Activated CD4-positive, alpha-beta T cell treated with anti-CD3 and anti-CD28 coated beads, Interleukin-2, amount 10 ng/mL, durations not matched to agents 24 days and 14 days (primary cell): ENCODE measurements at regions of chr5 and their contacts with region 1.

Region 1: GRCh38 chr5:157571357-157571827 is 4.2 kb downstream of the ADAM19 start:
- DNase-seq: peak; percentile 83
- H3K4me3 Mint-ChIP-seq: peak overlapping the region; percentile 91
- H3K27ac Mint-ChIP-seq: peak overlapping the region; percentile 94
- H3K4me1 Mint-ChIP-seq: peaks cover 62% of the 10 kb centered on the region
- H3K27me3 Mint-ChIP-seq: no peaks in the 10 kb centered on the region

Region 2: DNA sequence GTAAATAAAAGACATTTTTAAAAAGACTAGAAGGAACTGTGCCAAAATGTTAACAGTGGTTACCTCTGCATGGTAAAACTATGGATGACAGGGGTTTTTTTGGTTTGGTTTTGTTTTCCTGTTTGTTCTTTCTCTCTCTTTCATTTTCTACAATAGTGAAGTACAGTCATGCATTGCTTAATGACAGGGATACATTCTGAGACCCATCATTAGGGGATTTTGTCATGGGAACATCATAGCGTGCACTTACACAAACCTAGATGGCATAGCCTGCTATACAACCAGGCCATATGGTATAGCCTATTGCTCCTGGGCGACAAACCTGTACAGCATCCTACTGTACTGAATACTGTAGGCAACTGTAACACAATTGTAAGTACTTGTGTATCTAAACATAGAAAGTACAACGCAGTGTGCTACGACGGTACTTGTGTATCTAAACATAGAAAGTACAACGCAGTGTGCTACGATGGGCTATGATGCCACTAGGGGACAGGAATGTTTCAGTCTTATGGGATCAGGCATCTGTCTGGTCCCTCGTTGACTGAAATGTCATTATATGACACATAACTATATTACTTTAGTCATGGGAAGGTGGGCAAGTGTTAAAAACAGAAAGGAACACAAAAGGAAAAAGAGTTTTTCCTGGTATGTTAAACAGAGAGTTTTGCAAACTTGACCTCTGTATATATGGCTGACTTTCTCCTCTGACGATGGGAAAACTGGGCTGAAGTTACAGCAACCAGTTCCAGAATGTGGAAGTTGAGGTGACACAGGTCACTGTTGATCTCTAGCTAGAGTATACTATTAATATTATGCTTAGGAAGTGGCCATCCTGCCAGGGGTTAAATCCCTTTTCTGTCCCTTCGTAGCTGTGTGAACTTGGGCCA is 11.6 kb after region 1 on chr5:
- intact Hi-C with region 1: loop called (anchors 1 kb)
- DNase-seq: peak; percentile 75
- H3K4me3 Mint-ChIP-seq: peak overlapping the region; percentile 65
- H3K27ac Mint-ChIP-seq: peak overlapping the region; percentile 80
- H3K4me1 Mint-ChIP-seq: peaks cover 56% of the 10 kb centered on the region
- H3K27me3 Mint-ChIP-seq: no peaks in the 10 kb centered on the region

Region 3: GRCh38 chr5:157670662-157671591 is 99.5 kb after region 1 on chr5 and contains the start of gene C5orf52:
- intact Hi-C with region 1: loop called (anchors 5 kb)
- DNase-seq: peak; percentile 79
- H3K4me3 Mint-ChIP-seq: peak within 1 kb of the TSS; percentile 96
- H3K27ac Mint-ChIP-seq: peak within 1 kb of the TSS; percentile 91
- H3K4me1 Mint-ChIP-seq: peaks cover 34% of the 10 kb centered on the region
- H3K27me3 Mint-ChIP-seq: peaks cover 17% of the 10 kb centered on the region
- total RNA-seq, gene C5orf52: 0.42 TPM in 1 of 2 replicates, not detected in the other